ENCODE measurements at regions of chr7 and their contacts with region 1.

Region 1: DNA sequence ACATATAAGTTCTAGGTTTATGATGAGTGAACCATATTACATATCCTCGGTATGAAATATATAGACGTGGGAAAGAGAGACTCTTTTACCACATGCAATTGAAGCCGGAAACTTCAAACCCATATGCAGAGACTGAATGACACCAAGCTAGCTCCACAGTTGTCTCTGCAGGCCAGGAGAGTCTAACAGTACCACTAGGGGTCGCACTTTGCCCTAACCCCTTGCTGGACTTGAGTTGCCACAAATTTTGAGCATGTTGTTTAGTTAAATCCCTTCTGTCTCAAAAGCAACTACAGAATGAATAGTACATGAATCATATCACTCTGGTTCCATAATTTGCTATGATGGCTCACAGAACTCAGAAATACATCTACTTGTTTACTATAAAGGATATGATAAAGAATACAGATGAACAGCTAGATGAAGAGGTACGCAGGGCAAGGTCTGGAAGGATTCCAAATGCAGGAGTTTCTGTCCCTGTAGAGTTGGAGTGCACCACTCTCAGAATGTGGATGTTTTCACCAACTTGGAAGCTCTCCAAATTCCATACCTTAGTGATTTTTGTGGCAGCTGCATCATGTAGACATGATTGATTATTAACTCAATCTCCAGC is 112.4 kb upstream of the YAE1 start:
- DNase-seq: peak; percentile 79
- ATAC-seq: peak; percentile 96
- H3K4me3 Mint-ChIP-seq: no peak overlapping the region
- H3K27ac Mint-ChIP-seq: no peak overlapping the region
- H3K4me1 Mint-ChIP-seq: peaks cover 2% of the 10 kb centered on the region; the same call in 1 of the 2 replicates
- H3K27me3 Mint-ChIP-seq: no peaks in the 10 kb centered on the region
- CTCF ChIP-seq: peak; percentile 83

Region 2: DNA sequence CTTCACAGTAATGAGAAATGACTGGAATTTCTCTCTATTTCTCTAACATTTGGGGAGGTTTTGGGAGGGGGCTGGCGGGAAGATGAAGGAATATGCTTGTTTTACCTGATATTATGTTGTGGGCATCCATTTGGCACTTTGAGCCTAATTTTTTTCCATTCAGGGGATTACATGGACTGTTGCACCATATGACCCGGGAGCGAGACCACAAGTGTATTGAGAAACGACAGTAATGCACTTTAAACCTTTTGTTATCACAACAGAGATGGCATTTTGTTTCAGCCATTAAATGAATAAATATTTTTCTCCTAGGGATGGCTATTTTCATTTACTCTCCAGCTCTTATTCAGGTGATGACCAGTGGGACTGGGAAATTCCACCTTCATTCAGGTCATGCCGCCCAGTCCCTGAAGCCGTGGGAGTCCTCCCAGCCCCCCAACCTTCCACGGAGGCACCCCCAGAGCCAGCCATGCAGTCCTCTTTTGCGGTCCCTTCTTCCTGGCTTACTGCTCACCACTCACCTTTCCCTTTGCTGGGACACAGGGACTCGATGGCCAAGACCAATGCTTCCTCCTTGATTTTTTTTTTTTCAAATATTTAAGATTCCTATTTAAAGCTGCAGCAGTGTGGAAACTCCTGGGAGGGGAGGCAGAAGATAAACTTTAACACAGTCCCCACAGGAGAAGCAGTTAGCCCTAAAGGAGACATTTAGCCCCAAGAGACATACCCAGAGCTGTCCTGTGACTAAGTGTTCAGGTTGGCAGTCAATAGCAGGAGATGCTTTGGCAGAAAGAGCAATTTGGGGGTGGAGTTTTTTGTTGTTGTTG is 78.6 kb before region 1 on chr7:
- CTCF ChIA-PET with region 1: no interaction called
- POLR2A ChIA-PET with region 1: no interaction called
- DNase-seq: no peak
- ATAC-seq: no peak
- H3K4me3 Mint-ChIP-seq: no peak overlapping the region
- H3K27ac Mint-ChIP-seq: no peak overlapping the region
- H3K4me1 Mint-ChIP-seq: peaks cover 5% of the 10 kb centered on the region; the same call in 1 of the 2 replicates
- H3K27me3 Mint-ChIP-seq: no peaks in the 10 kb centered on the region
- CTCF ChIP-seq: no peak

Region 3: DNA sequence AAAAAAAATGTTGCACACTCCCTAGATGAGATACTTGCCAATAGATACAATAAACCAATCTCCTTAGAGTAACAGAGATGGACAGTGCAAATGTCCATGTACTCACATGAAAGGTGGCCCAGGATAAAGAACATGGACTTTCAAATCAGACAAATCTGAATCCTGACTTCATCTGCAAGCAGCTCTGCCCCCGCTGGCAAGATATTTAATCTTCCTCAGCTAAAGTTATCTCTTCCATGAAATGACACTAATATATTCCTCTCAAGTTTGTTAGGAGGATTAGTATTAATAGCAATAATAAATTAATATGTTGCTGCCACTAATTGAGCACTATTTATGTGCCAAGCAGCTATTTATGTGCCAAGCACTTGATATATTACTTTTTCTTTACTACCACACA is 36.2 kb before region 1 on chr7:
- CTCF ChIA-PET with region 1: interaction called, 11 read pairs
- POLR2A ChIA-PET with region 1: no interaction called
- DNase-seq: no peak
- ATAC-seq: no peak
- H3K4me3 Mint-ChIP-seq: no peak overlapping the region
- H3K27ac Mint-ChIP-seq: no peak overlapping the region
- H3K4me1 Mint-ChIP-seq: peaks cover 8% of the 10 kb centered on the region
- H3K27me3 Mint-ChIP-seq: no peaks in the 10 kb centered on the region; the same call in 1 of the 2 replicates
- CTCF ChIP-seq: no peak

Region 4: GRCh38 chr7:39428221-39428620 is 25.6 kb before region 1 on chr7:
- CTCF ChIA-PET with region 1: interaction called, 10 read pairs
- POLR2A ChIA-PET with region 1: no interaction called
- DNase-seq: no peak
- ATAC-seq: no peak
- H3K4me3 Mint-ChIP-seq: no peak overlapping the region
- H3K27ac Mint-ChIP-seq: no peak overlapping the region
- H3K4me1 Mint-ChIP-seq: peaks cover 20% of the 10 kb centered on the region
- H3K27me3 Mint-ChIP-seq: no peaks in the 10 kb centered on the region
- CTCF ChIP-seq: no peak

Region 5: GRCh38 chr7:39465055-39465929 is 11.4 kb after region 1 on chr7:
- CTCF ChIA-PET with region 1: interaction called, 40 read pairs
- POLR2A ChIA-PET with region 1: interaction called, 5 read pairs
- DNase-seq: peak; percentile 58
- ATAC-seq: peak; percentile 75
- H3K4me3 Mint-ChIP-seq: no peak overlapping the region
- H3K27ac Mint-ChIP-seq: peak overlapping the region; percentile 90
- H3K4me1 Mint-ChIP-seq: peaks cover 36% of the 10 kb centered on the region
- H3K27me3 Mint-ChIP-seq: no peaks in the 10 kb centered on the region; the same call in 1 of the 2 replicates
- CTCF ChIP-seq: peak; percentile 61

Region 6: GRCh38 chr7:39488467-39489393 is 34.9 kb after region 1 on chr7:
- CTCF ChIA-PET with region 1: interaction called, 13 read pairs
- POLR2A ChIA-PET with region 1: no interaction called
- DNase-seq: no peak
- ATAC-seq: no peak
- H3K4me3 Mint-ChIP-seq: no peak overlapping the region
- H3K27ac Mint-ChIP-seq: no peak overlapping the region
- H3K4me1 Mint-ChIP-seq: no peaks in the 10 kb centered on the region
- H3K27me3 Mint-ChIP-seq: no peaks in the 10 kb centered on the region; the same call in 1 of the 2 replicates
- CTCF ChIP-seq: no peak

Region 7: DNA sequence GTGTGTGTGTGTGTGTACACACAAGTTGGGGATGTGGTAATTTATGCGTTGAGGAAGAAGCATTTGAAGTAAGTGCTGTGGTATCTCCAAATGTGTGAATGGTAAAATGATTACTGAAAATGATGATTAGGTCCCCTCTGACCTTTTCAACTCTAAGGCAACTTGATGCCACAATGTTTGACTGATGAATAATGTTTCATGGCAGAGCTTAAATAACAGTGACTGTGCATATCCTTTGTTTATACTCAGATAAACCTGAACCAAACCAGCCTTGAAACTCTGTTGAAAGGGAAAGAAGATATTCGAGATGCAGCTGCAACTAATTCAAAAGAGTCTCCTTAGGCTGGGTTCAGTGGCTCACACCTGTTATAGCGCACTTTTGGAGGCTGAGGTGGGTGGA is 47.5 kb after region 1 on chr7:
- CTCF ChIA-PET with region 1: interaction called, 14 read pairs
- POLR2A ChIA-PET with region 1: no interaction called
- DNase-seq: no peak
- ATAC-seq: no peak
- H3K4me3 Mint-ChIP-seq: no peak overlapping the region
- H3K27ac Mint-ChIP-seq: no peak overlapping the region
- H3K4me1 Mint-ChIP-seq: no peaks in the 10 kb centered on the region
- H3K27me3 Mint-ChIP-seq: no peaks in the 10 kb centered on the region; the same call in 1 of the 2 replicates
- CTCF ChIP-seq: no peak

Region 8: DNA sequence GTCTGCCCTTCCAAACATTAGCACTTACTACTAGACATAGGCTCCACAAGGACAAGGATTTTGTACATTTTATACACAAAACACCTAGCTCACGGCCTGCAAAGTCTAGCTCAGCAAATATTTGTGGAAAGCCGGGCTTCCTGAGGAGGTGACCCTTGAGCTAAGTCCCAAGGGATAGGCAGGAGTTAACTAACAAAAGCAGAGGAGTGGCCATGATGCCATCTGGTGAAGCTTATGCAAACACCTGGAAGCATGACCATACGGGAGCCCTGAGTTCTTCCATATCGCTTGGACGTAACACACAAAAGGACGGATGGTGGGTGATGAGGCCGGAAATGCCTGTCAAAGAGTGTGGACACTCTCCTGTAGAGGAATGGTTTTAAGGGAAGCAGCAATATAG is 86.5 kb after region 1 on chr7:
- CTCF ChIA-PET with region 1: no interaction called
- POLR2A ChIA-PET with region 1: no interaction called
- DNase-seq: no peak
- ATAC-seq: peak; percentile 47; the same call in 1 of the 2 replicates
- H3K4me3 Mint-ChIP-seq: no peak overlapping the region
- H3K27ac Mint-ChIP-seq: 0 out of 2 replicates have a peak overlapping the region, but pooled peaks have one; percentile 62
- H3K4me1 Mint-ChIP-seq: peaks cover 18% of the 10 kb centered on the region
- H3K27me3 Mint-ChIP-seq: no peaks in the 10 kb centered on the region
- CTCF ChIP-seq: no peak